Caco-2 (cell line): ENCODE measurements at regions of chr6 and their contacts with region 1.

Region 1: DNA sequence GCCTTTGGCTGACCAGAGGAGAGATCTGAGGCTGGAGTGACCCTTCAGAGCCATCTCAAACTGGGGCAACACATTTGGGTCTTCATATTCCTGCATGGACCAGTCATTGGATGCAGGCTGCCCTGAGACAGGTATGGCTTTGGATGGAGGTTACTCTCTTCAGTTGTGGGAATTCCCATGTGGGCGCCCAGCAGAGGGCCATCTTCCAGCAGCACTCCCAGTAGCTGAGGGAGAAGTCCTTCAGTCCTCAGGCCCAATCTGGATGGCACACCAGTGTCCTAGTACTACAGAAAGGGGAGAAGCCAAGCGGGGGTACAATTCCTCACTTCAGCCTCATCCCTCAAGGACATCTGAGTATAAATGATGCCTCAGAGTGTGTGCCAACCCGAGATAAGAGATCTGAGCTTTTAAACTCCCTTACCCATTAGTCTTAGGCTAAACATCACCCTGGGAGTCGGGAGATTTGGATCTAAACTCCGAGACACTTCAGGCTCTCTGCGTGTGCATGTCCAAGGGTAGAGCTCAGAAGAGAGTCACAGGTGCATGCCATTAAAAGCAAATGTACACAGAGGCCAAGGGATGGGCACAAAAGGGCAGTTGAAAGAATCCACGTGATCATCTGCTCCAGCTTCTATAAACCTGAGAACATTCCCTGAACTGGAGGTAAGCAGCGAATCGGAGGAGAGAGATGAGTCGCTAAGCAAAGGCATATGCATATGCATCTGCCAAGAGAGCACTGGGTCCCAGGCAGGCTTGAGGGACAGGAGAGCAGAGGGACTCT is 204.6 kb downstream of the CD83 start:
- DNase-seq: peak; percentile 22 to 37
- H3K4me3 ChIP-seq: no peak overlapping the region
- H3K4me3 Mint-ChIP-seq: no peak overlapping the region
- H3K27ac Mint-ChIP-seq: no peak overlapping the region
- H3K4me1 ChIP-seq: peaks cover 6% of the 10 kb centered on the region
- H3K4me1 Mint-ChIP-seq: no peaks in the 10 kb centered on the region
- H3K27me3 ChIP-seq: no peaks in the 10 kb centered on the region
- H3K27me3 Mint-ChIP-seq: no peaks in the 10 kb centered on the region
- CTCF ChIP-seq: peak in 1 of 2 experiments; percentile 32

Region 2: GRCh38 chr6:14452567-14453527 is 130.7 kb after region 1 on chr6:
- CTCF ChIA-PET with region 1: no interaction called
- POLR2A ChIA-PET with region 1: no interaction called
- intact Hi-C with region 1: no loop called
- DNase-seq: no peak
- H3K4me3 ChIP-seq: no peak overlapping the region
- H3K4me3 Mint-ChIP-seq: no peak overlapping the region
- H3K27ac Mint-ChIP-seq: no peak overlapping the region
- H3K4me1 ChIP-seq: no peaks in the 10 kb centered on the region
- H3K4me1 Mint-ChIP-seq: peaks cover 5% of the 10 kb centered on the region
- H3K27me3 ChIP-seq: no peaks in the 10 kb centered on the region
- H3K27me3 Mint-ChIP-seq: no peaks in the 10 kb centered on the region
- CTCF ChIP-seq: no peak

Region 3: DNA sequence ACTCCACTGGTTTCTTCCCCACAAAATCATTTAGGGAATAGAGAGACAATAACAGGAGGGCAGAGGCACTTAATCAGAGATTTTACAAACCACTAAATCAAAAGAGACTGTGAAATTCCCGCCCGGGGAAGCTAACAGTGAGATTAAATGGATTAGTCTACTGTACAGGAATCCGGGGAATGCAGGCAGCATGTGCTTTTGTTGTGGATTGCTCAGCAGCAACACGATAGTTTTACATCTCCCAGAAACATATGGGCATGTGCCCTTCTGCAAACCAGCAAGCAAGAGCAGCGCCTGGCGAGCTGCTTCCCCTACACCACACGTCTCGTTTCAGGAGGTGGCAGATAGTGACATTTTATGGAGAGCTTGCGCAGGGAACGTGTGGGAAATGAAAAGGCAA is 177.7 kb after region 1 on chr6:
- CTCF ChIA-PET with region 1: interaction called, 10 read pairs
- POLR2A ChIA-PET with region 1: no interaction called
- intact Hi-C with region 1: no loop called
- DNase-seq: peak; percentile 58 to 65
- H3K4me3 ChIP-seq: no peak overlapping the region
- H3K4me3 Mint-ChIP-seq: no peak overlapping the region
- H3K27ac Mint-ChIP-seq: no peak overlapping the region
- H3K4me1 ChIP-seq: peaks cover 14% of the 10 kb centered on the region
- H3K4me1 Mint-ChIP-seq: peaks cover 14% of the 10 kb centered on the region
- H3K27me3 ChIP-seq: no peaks in the 10 kb centered on the region
- H3K27me3 Mint-ChIP-seq: no peaks in the 10 kb centered on the region
- CTCF ChIP-seq: no peak